ENCODE measurements at regions of chr2 and their contacts with region 1.

Region 1: DNA sequence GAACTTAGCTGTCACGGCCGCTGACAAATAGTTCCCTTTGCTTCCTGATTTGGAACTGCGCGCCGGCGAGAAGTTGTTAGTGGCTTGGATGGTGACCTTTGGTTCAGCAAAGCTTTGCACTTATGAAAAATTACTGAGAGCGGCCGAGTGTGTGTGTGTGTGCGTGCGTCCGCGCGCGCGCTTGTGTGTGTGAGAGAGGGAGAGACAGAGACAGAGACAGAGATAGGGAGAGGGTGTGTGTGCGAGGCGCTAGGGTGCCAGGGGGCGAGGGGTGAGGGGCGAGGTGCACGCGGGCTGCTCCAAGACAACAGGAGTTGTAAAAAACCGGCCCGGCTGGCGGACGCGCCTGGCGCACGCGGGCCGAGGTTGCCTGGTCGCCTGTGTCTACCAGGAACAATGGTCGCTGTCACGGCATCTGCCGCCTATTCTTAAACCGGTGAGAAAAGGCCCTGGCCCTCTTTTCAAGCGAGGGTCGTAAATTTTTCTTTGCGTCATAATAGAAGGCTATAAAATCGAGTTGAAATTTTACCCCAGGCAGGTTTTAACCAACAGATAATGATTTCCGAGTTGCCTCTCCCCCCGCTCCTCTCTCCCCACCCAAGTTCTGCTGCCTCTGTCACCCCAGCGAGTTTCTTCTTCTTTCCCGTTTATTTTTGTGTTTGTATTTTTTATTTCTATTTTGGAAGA is 535 bp downstream of the HOXD3 start:
- DNase-seq: no peak
- ATAC-seq: no peak
- H3K4me3 ChIP-seq: no peak overlapping the region
- H3K27ac ChIP-seq: no peak overlapping the region
- H3K4me1 ChIP-seq: no peaks in the 10 kb centered on the region
- H3K27me3 ChIP-seq: peaks cover 93% of the 10 kb centered on the region
- CTCF ChIP-seq: no peak
- POLR2A ChIP-seq: no peak
- RAD21 ChIP-seq: no peak

Region 2: DNA sequence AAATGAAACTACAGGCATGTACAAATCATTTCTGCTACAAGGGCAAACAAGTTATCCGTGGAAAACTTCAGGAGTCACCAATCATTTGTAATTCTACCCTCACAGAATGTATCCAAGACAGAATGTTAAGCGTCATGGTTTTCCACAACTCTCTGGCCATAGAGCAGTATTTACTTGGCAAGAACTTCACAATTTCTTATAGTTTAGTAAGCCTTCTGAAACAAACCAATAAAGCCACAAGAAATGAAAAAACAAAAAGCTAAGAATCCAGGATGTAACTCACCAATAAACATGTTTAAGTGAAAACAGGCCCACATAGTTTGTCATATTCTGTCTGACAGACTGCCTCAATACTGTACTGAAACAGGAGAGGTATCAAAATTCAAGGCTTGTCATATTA is 225.8 kb before region 1 on chr2:
- CTCF ChIA-PET with region 1: no interaction called
- POLR2A ChIA-PET with region 1: interaction called, 13 read pairs
- dilution Hi-C with region 1: no loop called
- in situ Hi-C with region 1: no loop called
- intact Hi-C with region 1: no loop called
- DNase-seq: peak; percentile 88
- ATAC-seq: peak; percentile 75
- H3K4me3 ChIP-seq: no peak overlapping the region
- H3K27ac ChIP-seq: no peak overlapping the region
- H3K4me1 ChIP-seq: no peaks in the 10 kb centered on the region
- H3K27me3 ChIP-seq: no peaks in the 10 kb centered on the region
- CTCF ChIP-seq: no peak
- POLR2A ChIP-seq: no peak
- RAD21 ChIP-seq: no peak

Measured in IMR-90 (cell line).